ENCODE measurements at regions of chr14 and their contacts with region 1.

Region 1: DNA sequence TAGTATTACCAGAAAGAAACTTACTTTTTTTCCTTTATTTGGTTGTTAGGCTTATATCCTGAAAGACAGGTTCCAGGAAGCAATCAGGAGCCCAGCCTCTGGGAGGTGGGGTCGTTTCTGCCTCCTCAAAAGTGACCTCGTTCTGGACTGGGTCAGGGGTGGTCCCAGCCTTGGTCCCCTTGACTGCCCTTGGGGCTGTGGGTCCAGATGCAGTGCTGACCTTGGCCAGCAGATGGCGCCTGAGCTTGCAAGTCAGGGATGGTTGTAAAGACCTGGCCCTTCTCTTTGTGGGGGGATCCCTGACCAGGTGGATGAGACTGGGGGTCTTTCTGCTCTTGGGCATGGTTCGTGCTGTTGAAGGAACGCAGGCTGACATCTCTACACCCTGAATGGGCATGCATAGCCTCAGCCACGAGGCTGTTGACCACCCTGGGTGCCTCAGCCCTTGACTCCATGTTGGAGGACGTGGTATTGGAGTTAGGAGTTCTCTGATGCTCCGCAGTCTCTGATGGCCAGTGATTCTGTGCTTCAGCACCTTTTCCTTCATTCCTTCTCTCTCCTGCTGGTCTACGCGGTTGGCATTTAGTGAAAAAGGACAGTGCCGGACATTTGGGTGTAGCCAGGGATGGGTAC is 62.4 kb downstream of the ADCK1 start:
- DNase-seq: peak; percentile 36 to 59 (median 45)
- H3K4me3 ChIP-seq: no peak overlapping the region
- H3K4me3 Mint-ChIP-seq: no peak overlapping the region
- H3K27ac ChIP-seq: no peak overlapping the region
- H3K27ac Mint-ChIP-seq: no peak overlapping the region
- H3K4me1 ChIP-seq: no peaks in the 10 kb centered on the region
- H3K4me1 Mint-ChIP-seq: no peaks in the 10 kb centered on the region
- H3K27me3 ChIP-seq: no peaks in the 10 kb centered on the region
- H3K27me3 Mint-ChIP-seq: peaks cover 0 to 2% of the 10 kb centered on the region in 2 donors

Region 2: GRCh38 chr14:77508249-77508648 is 354.0 kb before region 1 on chr14:
- CTCF ChIA-PET with region 1: no interaction called
- POLR2A ChIA-PET with region 1: no interaction called
- intact Hi-C with region 1: no loop called
- DNase-seq: no peak
- H3K4me3 ChIP-seq: no peak overlapping the region
- H3K4me3 Mint-ChIP-seq: peak overlapping the region in 1 of 8 donors; percentile 41
- H3K27ac ChIP-seq: no peak overlapping the region
- H3K27ac Mint-ChIP-seq: peak overlapping the region in 1 of 7 donors; percentile 49
- H3K4me1 ChIP-seq: no peaks in the 10 kb centered on the region
- H3K4me1 Mint-ChIP-seq: no peaks in the 10 kb centered on the region
- H3K27me3 ChIP-seq: no peaks in the 10 kb centered on the region
- H3K27me3 Mint-ChIP-seq: no peaks in the 10 kb centered on the region

Region 3: GRCh38 chr14:77844802-77845201 is 17.5 kb before region 1 on chr14:
- CTCF ChIA-PET with region 1: interaction called, 10 read pairs
- POLR2A ChIA-PET with region 1: no interaction called
- intact Hi-C with region 1: no loop called
- DNase-seq: no peak
- H3K4me3 ChIP-seq: no peak overlapping the region
- H3K4me3 Mint-ChIP-seq: no peak overlapping the region
- H3K27ac ChIP-seq: no peak overlapping the region
- H3K27ac Mint-ChIP-seq: no peak overlapping the region
- H3K4me1 ChIP-seq: no peaks in the 10 kb centered on the region
- H3K4me1 Mint-ChIP-seq: no peaks in the 10 kb centered on the region
- H3K27me3 ChIP-seq: no peaks in the 10 kb centered on the region
- H3K27me3 Mint-ChIP-seq: no peaks in the 10 kb centered on the region

Region 4: GRCh38 chr14:77872983-77873382 is 10.7 kb after region 1 on chr14:
- CTCF ChIA-PET with region 1: interaction called, 17 read pairs
- POLR2A ChIA-PET with region 1: no interaction called
- intact Hi-C with region 1: no loop called
- DNase-seq: no peak
- H3K4me3 ChIP-seq: no peak overlapping the region
- H3K4me3 Mint-ChIP-seq: no peak overlapping the region
- H3K27ac ChIP-seq: no peak overlapping the region
- H3K27ac Mint-ChIP-seq: no peak overlapping the region
- H3K4me1 ChIP-seq: no peaks in the 10 kb centered on the region
- H3K4me1 Mint-ChIP-seq: no peaks in the 10 kb centered on the region
- H3K27me3 ChIP-seq: no peaks in the 10 kb centered on the region
- H3K27me3 Mint-ChIP-seq: no peaks in the 10 kb centered on the region

Region 5: DNA sequence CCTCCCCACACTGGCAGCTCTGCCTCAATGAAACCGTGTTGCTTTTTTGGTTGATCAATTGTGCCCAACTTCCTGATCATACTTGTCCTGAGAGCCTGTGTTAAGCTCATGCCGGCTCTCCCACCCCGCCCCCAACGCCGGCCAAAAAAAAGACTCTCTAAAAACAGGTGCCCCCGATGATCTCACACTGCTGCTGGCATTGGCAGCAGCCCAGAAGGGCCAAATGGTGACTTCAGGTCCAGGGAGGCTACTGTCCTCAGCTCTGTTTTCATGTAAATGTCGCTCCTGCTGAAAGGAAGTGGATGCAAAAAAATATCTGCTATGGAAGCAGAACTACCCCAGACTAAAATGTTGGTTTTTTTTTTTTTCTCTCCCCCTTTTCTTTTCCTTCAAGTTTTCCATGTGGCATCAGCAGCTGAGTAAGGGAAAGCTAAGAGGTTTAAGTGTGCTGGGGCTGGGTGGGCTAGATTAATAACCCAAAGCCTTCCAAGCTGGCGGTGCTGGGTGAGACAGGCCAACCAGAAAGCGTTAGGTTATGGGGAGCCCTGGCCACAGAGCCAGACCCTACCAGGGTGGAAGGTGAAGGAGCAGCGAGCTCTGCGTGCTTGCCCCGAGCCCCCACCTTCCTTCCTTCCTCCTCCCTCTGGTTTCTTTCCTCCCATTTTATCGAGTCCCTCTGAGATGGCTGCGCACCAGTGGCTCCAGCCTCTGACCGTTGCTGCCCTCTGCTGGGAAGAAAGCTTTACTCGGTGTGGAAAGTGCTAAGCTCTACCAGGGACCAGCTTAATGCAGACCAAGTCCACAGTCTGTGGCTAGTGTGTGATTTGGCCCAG is 704.0 kb after region 1 on chr14:
- CTCF ChIA-PET with region 1: interaction called, 14 read pairs
- POLR2A ChIA-PET with region 1: no interaction called
- intact Hi-C with region 1: no loop called
- DNase-seq: peak; percentile 21 to 40 (median 27)
- H3K4me3 ChIP-seq: no peak overlapping the region
- H3K4me3 Mint-ChIP-seq: peak overlapping the region in 6 of 8 donors; percentile 15 to 66 (median 40)
- H3K27ac ChIP-seq: no peak overlapping the region
- H3K27ac Mint-ChIP-seq: peak overlapping the region in 3 of 7 donors; percentile 15 to 62 (median 17)
- H3K4me1 ChIP-seq: no peaks in the 10 kb centered on the region
- H3K4me1 Mint-ChIP-seq: peaks cover 0 to 2% (median 0%) of the 10 kb centered on the region in 4 donors
- H3K27me3 ChIP-seq: no peaks in the 10 kb centered on the region
- H3K27me3 Mint-ChIP-seq: no peaks in the 10 kb centered on the region

Region 6: DNA sequence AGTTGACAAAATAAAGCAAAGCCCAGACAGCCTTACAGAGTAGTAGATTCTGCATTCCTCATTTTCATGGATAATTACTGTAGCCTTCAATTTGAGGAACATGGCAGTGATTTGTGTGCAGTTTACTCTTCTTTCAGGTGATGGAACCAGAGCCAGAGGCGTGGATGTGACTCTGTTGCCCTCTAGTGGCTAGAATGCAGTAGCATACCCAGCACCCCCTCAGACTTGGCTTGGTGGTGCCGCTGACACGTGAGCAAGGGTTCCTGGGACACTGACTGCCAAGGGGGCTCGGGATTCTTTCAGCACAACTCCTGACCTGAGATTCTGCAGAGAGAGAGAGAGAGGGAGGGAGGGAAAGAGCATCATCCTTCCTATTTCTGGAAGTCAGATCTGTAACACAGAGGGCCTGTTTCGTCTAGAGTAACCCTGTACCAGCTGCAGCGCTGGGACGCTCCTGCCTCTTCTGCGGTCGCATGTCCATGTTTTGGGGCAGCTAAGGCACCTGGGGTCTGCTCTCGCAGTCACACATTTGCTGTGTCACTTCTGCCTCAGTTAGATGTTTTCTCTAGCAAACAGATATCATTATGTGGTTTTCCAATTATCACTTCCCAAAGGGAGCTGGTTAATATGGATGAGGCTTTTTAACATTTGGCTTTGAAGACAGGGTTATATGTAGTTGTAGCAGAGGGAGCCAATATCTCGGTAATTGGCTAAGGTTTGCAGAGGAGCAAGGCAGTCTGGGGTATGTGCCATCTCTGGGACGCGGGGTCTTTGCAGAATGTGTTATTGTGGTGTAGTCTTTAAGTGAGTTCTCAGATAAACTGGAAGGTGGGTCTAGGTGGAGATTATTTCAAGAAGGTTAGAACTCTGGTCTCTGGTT is 736.0 kb after region 1 on chr14:
- CTCF ChIA-PET with region 1: interaction called, 22 read pairs
- POLR2A ChIA-PET with region 1: no interaction called
- intact Hi-C with region 1: no loop called
- DNase-seq: peak in 4 of 5 donors; percentile 12 to 20 (median 14)
- H3K4me3 ChIP-seq: no peak overlapping the region
- H3K4me3 Mint-ChIP-seq: no peak overlapping the region
- H3K27ac ChIP-seq: no peak overlapping the region
- H3K27ac Mint-ChIP-seq: no peak overlapping the region
- H3K4me1 ChIP-seq: no peaks in the 10 kb centered on the region
- H3K4me1 Mint-ChIP-seq: peaks cover 0 to 1% (median 0%) of the 10 kb centered on the region in 4 donors
- H3K27me3 ChIP-seq: no peaks in the 10 kb centered on the region
- H3K27me3 Mint-ChIP-seq: no peaks in the 10 kb centered on the region

Measured in CD4-positive, alpha-beta memory T cell (primary cell).